Naive thymus-derived CD8-positive, alpha-beta T cell (primary cell): ENCODE measurements at regions of chr9 and their contacts with region 1.

Region 1: GRCh38 chr9:125119643-125120286 is 23.6 kb downstream of the SCAI start:
- DNase-seq: peak in 5 of 10 donors; percentile 7 to 49 (median 32)
- ATAC-seq: peak; percentile 81 to 93
- H3K4me3 Mint-ChIP-seq: peak overlapping the region in 4 of 10 donors; percentile 2 to 18 (median 10)
- H3K27ac Mint-ChIP-seq: peak overlapping the region in 7 of 10 donors; percentile 5 to 75 (median 43)
- H3K4me1 Mint-ChIP-seq: peaks cover 9 to 40% (median 30%) of the 10 kb centered on the region in 4 donors
- H3K27me3 Mint-ChIP-seq: no peaks in the 10 kb centered on the region

Region 2: GRCh38 chr9:124861342-124862229 is 258.2 kb before region 1 on chr9 and contains the starts of genes ARPC5L and RPL35:
- POLR2A ChIA-PET with region 1: interaction called, 10 read pairs
- DNase-seq: peak; percentile 91 to 97 (median 95)
- ATAC-seq: peak; percentile 94
- H3K4me3 Mint-ChIP-seq: peak within 1 kb of the TSS; percentile 89 to 99 (median 94)
- H3K27ac Mint-ChIP-seq: peak within 1 kb of the TSS; percentile 72 to 99 (median 98)
- H3K4me1 Mint-ChIP-seq: peaks cover 14 to 34% (median 32%) of the 10 kb centered on the region in 4 donors
- H3K27me3 Mint-ChIP-seq: no peaks in the 10 kb centered on the region
- polyA plus RNA-seq, gene ARPC5L: 37.5 to 70.4 (median 43.1) TPM
- polyA plus RNA-seq, gene RPL35: 1,999 to 2,475 (median 2,297) TPM

Region 3: DNA sequence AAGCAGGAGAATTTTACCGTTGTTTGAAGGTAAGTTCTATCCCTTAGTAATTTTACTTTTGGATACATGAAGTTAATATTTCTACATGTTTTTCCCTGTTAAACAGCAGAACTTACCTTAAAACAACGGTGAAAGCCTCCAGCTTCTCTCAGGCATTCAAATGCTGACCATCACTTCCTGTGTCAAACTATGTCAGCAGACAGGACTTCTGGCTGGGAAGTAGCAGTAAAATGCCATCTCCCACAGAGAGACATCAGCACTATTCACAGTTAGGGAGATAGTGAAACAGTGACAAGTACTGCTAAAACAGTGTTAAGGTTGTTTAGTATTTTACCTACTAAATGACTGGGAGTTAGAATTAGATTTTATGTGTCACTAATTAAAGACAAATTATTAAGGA is 144.6 kb before region 1 on chr9:
- POLR2A ChIA-PET with region 1: no interaction called
- DNase-seq: no peak
- ATAC-seq: no peak
- H3K4me3 Mint-ChIP-seq: no peak overlapping the region
- H3K27ac Mint-ChIP-seq: no peak overlapping the region
- H3K4me1 Mint-ChIP-seq: no peaks in the 10 kb centered on the region
- H3K27me3 Mint-ChIP-seq: no peaks in the 10 kb centered on the region

Region 4: DNA sequence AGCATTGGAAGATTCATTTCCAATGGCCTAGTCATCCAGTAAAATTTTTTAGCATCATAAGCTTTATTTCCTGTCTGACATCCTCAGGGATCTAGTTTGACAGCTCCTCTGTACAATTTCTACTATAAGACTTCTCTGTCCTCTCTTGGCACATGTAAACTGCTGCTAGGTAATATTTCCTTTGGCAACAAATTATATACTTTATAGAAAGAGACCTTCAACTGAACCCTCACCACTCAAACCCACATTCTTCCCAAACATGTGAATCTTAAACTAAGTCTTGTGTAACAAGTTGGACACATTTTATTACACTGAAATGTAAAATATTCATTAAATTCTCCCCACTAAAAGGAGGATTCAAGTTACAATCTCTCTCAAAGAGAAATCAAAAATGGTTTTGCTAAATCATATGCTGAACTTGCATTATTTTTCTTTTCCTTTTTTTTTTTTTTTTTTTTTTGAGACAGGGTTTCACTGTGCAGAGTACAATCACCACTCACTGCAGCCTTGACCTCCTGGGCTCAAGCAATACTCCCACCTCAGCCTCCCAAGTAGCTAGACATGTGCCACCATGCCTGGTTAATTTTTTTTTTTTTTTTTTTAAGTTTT is 13.4 kb before region 1 on chr9:
- POLR2A ChIA-PET with region 1: no interaction called
- DNase-seq: no peak
- ATAC-seq: no peak
- H3K4me3 Mint-ChIP-seq: no peak overlapping the region
- H3K27ac Mint-ChIP-seq: no peak overlapping the region
- H3K4me1 Mint-ChIP-seq: peaks cover 6 to 16% (median 11%) of the 10 kb centered on the region in 4 donors
- H3K27me3 Mint-ChIP-seq: no peaks in the 10 kb centered on the region